H1 (cell line): ENCODE measurements at regions of chr13 and their contacts with region 1.

Region 1: GRCh38 chr13:97798836-97799235 is 154.6 kb upstream of the IPO5 start:
- DNase-seq: no peak
- H3K4me3 ChIP-seq: no peak overlapping the region
- H3K27ac ChIP-seq: no peak overlapping the region
- H3K4me1 ChIP-seq: no peaks in the 10 kb centered on the region
- H3K27me3 ChIP-seq: no peaks in the 10 kb centered on the region
- CTCF ChIP-seq: no peak
- EP300 ChIP-seq: no peak
- POLR2A ChIP-seq: no peak
- RAD21 ChIP-seq: no peak

Region 2: DNA sequence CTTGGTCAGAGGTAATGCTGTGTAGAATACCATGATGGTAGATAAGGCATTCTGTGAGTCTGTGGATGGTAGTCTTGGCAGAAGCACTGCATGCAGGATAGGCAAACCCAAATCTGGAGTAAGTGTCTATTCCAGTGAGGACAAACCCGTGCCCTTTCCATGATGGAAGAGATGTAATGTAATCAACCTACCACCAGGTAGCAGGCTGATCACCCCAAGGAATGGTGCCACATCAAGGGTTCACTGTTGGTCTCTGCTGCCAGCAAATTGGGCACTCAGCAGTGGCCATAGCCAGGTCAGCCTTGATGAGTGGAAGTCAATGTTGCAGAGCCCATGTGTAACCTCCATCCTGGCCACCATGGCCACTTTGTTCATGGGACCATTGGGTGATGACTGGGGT is 209.8 kb before region 1 on chr13:
- CTCF ChIA-PET with region 1: interaction called, 13 read pairs
- POLR2A ChIA-PET with region 1: no interaction called
- DNase-seq: no peak
- H3K4me3 ChIP-seq: no peak overlapping the region
- H3K27ac ChIP-seq: no peak overlapping the region
- H3K4me1 ChIP-seq: no peaks in the 10 kb centered on the region
- H3K27me3 ChIP-seq: no peaks in the 10 kb centered on the region
- CTCF ChIP-seq: peak in 2 of 3 experiments; percentile 48 to 49; a peak in 3 of 4 replicates
- EP300 ChIP-seq: no peak
- POLR2A ChIP-seq: no peak
- RAD21 ChIP-seq: peak; percentile 62 to 67

Region 3: GRCh38 chr13:97753942-97754670 is 44.7 kb before region 1 on chr13:
- CTCF ChIA-PET with region 1: interaction called, 19 read pairs
- POLR2A ChIA-PET with region 1: no interaction called
- DNase-seq: peak in 1 of 2 experiments; percentile 77
- H3K4me3 ChIP-seq: no peak overlapping the region
- H3K27ac ChIP-seq: no peak overlapping the region
- H3K4me1 ChIP-seq: no peaks in the 10 kb centered on the region
- H3K27me3 ChIP-seq: no peaks in the 10 kb centered on the region
- CTCF ChIP-seq: peak; percentile 69 to 95 (median 89)
- EP300 ChIP-seq: no peak
- POLR2A ChIP-seq: no peak
- RAD21 ChIP-seq: peak; percentile 57 to 67

Region 4: GRCh38 chr13:97810152-97810551 is 11.3 kb after region 1 on chr13:
- CTCF ChIA-PET with region 1: interaction called, 12 read pairs
- POLR2A ChIA-PET with region 1: no interaction called
- DNase-seq: no peak
- H3K4me3 ChIP-seq: no peak overlapping the region
- H3K27ac ChIP-seq: no peak overlapping the region
- H3K4me1 ChIP-seq: no peaks in the 10 kb centered on the region
- H3K27me3 ChIP-seq: no peaks in the 10 kb centered on the region
- CTCF ChIP-seq: peak in 2 of 3 experiments; percentile 19 to 29; a peak in 2 of 4 replicates
- EP300 ChIP-seq: no peak
- POLR2A ChIP-seq: no peak
- RAD21 ChIP-seq: peak; percentile 40 to 45

Region 5: DNA sequence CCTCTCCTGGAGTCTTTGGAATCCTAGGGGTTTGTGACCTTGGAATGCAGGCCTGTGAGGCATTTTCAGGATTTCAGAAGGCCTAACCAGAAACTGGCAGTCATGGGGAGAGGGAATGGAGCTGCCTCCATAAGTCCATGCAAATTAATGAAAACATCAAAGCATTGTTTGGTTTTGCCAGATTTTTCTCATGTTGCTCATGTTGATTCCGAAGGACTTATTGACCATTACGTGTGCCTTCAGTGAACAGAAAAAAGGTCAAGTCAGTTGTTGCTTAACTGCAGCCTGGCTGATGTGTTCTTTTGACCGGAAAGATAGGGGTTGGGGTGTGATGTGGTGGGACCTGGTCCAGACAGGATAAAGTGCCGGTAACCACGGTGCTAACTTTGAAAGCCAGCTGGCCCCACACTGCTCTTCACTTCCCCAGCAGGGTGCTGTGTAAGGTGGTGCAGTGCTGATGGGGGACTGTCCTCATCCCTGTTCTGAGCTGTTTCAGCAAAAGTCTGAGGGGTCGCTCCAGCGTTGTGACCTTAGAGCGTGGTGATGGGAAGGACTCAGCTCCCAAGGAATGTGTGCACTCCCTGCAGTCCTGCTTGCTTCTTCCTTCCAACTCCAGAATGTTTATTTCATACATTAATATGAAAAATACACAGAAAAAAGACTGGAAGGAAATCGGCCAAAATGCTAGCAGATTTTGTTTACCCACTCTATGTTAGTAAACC is 374.8 kb after region 1 on chr13:
- CTCF ChIA-PET with region 1: no interaction called
- POLR2A ChIA-PET with region 1: no interaction called
- DNase-seq: no peak
- H3K4me3 ChIP-seq: no peak overlapping the region
- H3K27ac ChIP-seq: no peak overlapping the region
- H3K4me1 ChIP-seq: peaks cover 12 to 26% (median 20%) of the 10 kb centered on the region in 4 experiments
- H3K27me3 ChIP-seq: no peaks in the 10 kb centered on the region
- CTCF ChIP-seq: no peak
- EP300 ChIP-seq: no peak
- POLR2A ChIP-seq: no peak
- RAD21 ChIP-seq: no peak